Activated CD4-positive, alpha-beta T cell treated with anti-CD3 and anti-CD28 coated beads for 36 hours (primary cell): ENCODE measurements at regions of chr15 and their contacts with region 1.

Region 1: GRCh38 chr15:88620995-88621772 is at the start of gene AEN:
- DNase-seq: peak; percentile 97
- ATAC-seq: peak; percentile 83
- H3K4me3 Mint-ChIP-seq: peak within 1 kb of the TSS; percentile 90
- H3K27ac Mint-ChIP-seq: peak within 1 kb of the TSS; percentile 94
- H3K4me1 Mint-ChIP-seq: peaks cover 41% of the 10 kb centered on the region
- H3K27me3 Mint-ChIP-seq: peaks cover 5% of the 10 kb centered on the region
- total RNA-seq, gene AEN: 42.8 to 52.9 TPM

Region 2: GRCh38 chr15:88467073-88467934 is 153.9 kb before region 1 on chr15 and contains the starts of genes MRPL46 and MRPS11:
- CTCF ChIA-PET with region 1: no interaction called
- POLR2A ChIA-PET with region 1: interaction called, 4 read pairs
- intact Hi-C with region 1: loop called (anchors 1 to 2 kb)
- DNase-seq: peak; percentile 94
- ATAC-seq: peak; percentile 84
- H3K4me3 Mint-ChIP-seq: peak within 1 kb of the TSS; percentile 86
- H3K27ac Mint-ChIP-seq: peak within 1 kb of the TSS; percentile 98
- H3K4me1 Mint-ChIP-seq: peaks cover 26% of the 10 kb centered on the region
- H3K27me3 Mint-ChIP-seq: no peaks in the 10 kb centered on the region
- total RNA-seq, gene MRPL46: 31.0 to 35.6 TPM
- total RNA-seq, gene MRPS11: 58.3 to 67.1 TPM

Region 3: DNA sequence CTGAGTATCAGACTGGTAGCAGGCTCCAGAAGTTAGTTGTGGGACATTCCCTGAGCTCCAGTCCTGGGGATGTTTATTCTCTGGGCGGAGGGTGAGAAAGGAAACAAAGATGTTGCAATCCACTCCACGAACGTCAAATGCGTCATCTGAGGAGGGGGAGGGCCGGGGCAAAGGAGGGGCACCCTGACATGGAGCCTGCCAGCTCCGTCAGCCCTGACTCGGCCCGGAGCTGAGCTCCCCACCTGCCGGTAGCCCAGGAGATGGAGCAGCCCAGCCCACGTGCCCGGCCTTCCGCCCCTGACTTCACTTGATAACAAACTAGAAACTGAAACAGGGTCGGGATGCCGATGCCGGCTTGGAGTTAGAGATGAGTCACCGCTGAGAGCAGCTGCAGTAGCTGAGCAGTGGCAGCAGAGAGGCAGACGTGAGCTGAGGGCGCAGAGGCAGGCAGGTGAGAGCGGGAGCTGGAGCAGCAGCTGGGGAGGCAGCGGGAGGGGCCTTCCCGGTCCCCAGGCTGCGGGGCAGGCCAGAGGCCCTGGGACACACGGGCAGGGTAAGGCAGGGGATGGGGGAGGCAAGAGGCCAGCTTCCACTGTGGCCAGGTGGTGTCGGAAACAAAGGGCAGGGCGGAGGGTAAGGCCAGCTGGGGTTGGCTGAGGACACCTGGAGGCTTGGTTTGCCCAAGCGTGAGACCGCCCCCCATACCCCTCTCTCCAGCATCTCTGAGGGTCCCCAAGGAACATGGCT is 17.6 kb after region 1 on chr15 and contains the start of gene ISG20:
- CTCF ChIA-PET with region 1: interaction called, 25 read pairs
- POLR2A ChIA-PET with region 1: interaction called, 21 read pairs
- intact Hi-C with region 1: loop called in 1 of 2 experiments (anchors 1 kb)
- DNase-seq: peak; percentile 98
- ATAC-seq: peak; percentile 83
- H3K4me3 Mint-ChIP-seq: peak within 1 kb of the TSS; percentile 87
- H3K27ac Mint-ChIP-seq: peak within 1 kb of the TSS; percentile 98
- H3K4me1 Mint-ChIP-seq: peaks cover 87% of the 10 kb centered on the region
- H3K27me3 Mint-ChIP-seq: no peaks in the 10 kb centered on the region
- total RNA-seq, gene ISG20: 107 to 120 TPM

Region 4: GRCh38 chr15:88664151-88664778 is 43.1 kb after region 1 on chr15:
- CTCF ChIA-PET with region 1: interaction called, 28 read pairs
- POLR2A ChIA-PET with region 1: no interaction called
- intact Hi-C with region 1: loop called (anchors 1 kb)
- DNase-seq: peak; percentile 68
- ATAC-seq: peak; percentile 90
- H3K4me3 Mint-ChIP-seq: no peak overlapping the region
- H3K27ac Mint-ChIP-seq: no peak overlapping the region
- H3K4me1 Mint-ChIP-seq: peaks cover 32% of the 10 kb centered on the region
- H3K27me3 Mint-ChIP-seq: peaks cover 5% of the 10 kb centered on the region

Region 5: GRCh38 chr15:88717382-88718031 is 96.3 kb after region 1 on chr15:
- CTCF ChIA-PET with region 1: no interaction called
- POLR2A ChIA-PET with region 1: no interaction called
- intact Hi-C with region 1: no loop called
- DNase-seq: no peak
- ATAC-seq: no peak
- H3K4me3 Mint-ChIP-seq: no peak overlapping the region
- H3K27ac Mint-ChIP-seq: no peak overlapping the region
- H3K4me1 Mint-ChIP-seq: no peaks in the 10 kb centered on the region
- H3K27me3 Mint-ChIP-seq: peaks cover 7% of the 10 kb centered on the region

Region 6: GRCh38 chr15:88834211-88834812 is 213.1 kb after region 1 on chr15:
- CTCF ChIA-PET with region 1: interaction called, 3 read pairs
- POLR2A ChIA-PET with region 1: interaction called, 6 read pairs
- intact Hi-C with region 1: loop called in 1 of 2 experiments (anchors 1 kb)
- DNase-seq: peak; percentile 42
- ATAC-seq: peak; percentile 89
- H3K4me3 Mint-ChIP-seq: no peak overlapping the region
- H3K27ac Mint-ChIP-seq: no peak overlapping the region
- H3K4me1 Mint-ChIP-seq: peaks cover 4% of the 10 kb centered on the region
- H3K27me3 Mint-ChIP-seq: peaks cover 2% of the 10 kb centered on the region

Region 7: DNA sequence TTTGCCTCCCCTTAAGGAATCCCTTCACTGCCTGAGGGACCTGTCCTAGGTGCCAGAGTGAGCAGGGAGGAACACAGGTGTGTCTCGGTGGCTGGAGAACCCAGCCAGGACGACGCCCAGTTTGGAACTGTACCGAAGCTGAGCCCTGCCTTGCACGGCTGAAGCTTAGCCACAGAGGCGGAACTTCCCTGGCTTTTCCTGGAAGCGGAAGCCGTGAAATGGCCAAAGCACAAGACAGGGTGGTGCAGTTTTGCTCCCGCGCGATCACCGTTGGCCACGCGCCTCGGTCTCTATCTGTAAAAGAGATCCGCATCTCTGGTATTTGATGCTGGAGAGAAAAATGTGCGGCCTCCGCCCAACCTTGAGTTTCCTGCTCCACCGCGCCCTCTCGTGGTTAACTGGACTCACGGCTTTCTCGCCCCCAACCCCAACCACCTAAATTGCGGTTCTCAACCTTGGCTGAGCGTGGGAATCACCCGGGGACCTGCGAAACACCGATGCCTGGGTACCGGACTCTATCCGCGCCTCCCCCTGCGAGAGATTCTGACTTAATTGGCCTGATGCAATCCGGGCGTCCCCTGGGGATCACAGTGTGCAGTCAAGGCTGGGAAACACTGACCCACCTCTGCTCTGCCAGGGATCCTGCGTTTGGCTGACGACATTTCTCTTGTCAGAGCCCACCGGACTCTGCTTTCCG is 396.3 kb after region 1 on chr15:
- CTCF ChIA-PET with region 1: interaction called, 4 read pairs
- POLR2A ChIA-PET with region 1: no interaction called
- intact Hi-C with region 1: loop called in 1 of 2 experiments (anchors 5 kb)
- DNase-seq: peak; percentile 93
- ATAC-seq: peak; percentile 88
- H3K4me3 Mint-ChIP-seq: peak overlapping the region; percentile 47
- H3K27ac Mint-ChIP-seq: peak overlapping the region; percentile 55
- H3K4me1 Mint-ChIP-seq: peaks cover 17% of the 10 kb centered on the region
- H3K27me3 Mint-ChIP-seq: peaks cover 3% of the 10 kb centered on the region

Region 8: GRCh38 chr15:89243691-89244471 is 622.7 kb after region 1 on chr15 and contains the start of gene FANCI:
- CTCF ChIA-PET with region 1: no interaction called
- POLR2A ChIA-PET with region 1: no interaction called
- intact Hi-C with region 1: loop called in 1 of 2 experiments (anchors 5 kb)
- DNase-seq: peak; percentile 98
- ATAC-seq: peak; percentile 96
- H3K4me3 Mint-ChIP-seq: peak within 1 kb of the TSS; percentile 93
- H3K27ac Mint-ChIP-seq: peak within 1 kb of the TSS; percentile 93
- H3K4me1 Mint-ChIP-seq: peaks cover 29% of the 10 kb centered on the region
- H3K27me3 Mint-ChIP-seq: no peaks in the 10 kb centered on the region
- total RNA-seq, gene FANCI: 150 to 199 TPM